Activated B cell treated with CpG ODN at 0.5 μM for 24 hours (primary cell): ENCODE measurements at regions of chr16 and their contacts with region 1.

Region 1: GRCh38 chr16:30429678-30430427 is at the start of gene DCTPP1:
- DNase-seq: peak; percentile 86
- ATAC-seq: peak; percentile 97
- H3K4me3 Mint-ChIP-seq: no peak within 1 kb of the TSS
- H3K27ac Mint-ChIP-seq: no peak within 1 kb of the TSS
- H3K4me1 Mint-ChIP-seq: peaks cover 2% of the 10 kb centered on the region
- H3K27me3 Mint-ChIP-seq: no peaks in the 10 kb centered on the region
- CTCF ChIP-seq: no peak
- total RNA-seq, gene DCTPP1: 66.7 and 81.5 TPM in 2 replicates

Region 2: GRCh38 chr16:29951625-29952365 is 478.1 kb before region 1 on chr16:
- CTCF ChIA-PET with region 1: no interaction called
- POLR2A ChIA-PET with region 1: no interaction called
- intact Hi-C with region 1: no loop called
- DNase-seq: no peak
- ATAC-seq: no peak
- H3K4me3 Mint-ChIP-seq: no peak overlapping the region
- H3K27ac Mint-ChIP-seq: no peak overlapping the region
- H3K4me1 Mint-ChIP-seq: no peaks in the 10 kb centered on the region
- H3K27me3 Mint-ChIP-seq: peaks cover 14% of the 10 kb centered on the region
- CTCF ChIP-seq: no peak

Region 3: GRCh38 chr16:30407102-30407803 is 22.6 kb before region 1 on chr16 and contains the start of gene ZNF771:
- CTCF ChIA-PET with region 1: interaction called, 11 read pairs
- POLR2A ChIA-PET with region 1: interaction called, 13 read pairs
- intact Hi-C with region 1: loop called (anchors 1 kb)
- DNase-seq: peak; percentile 90
- ATAC-seq: peak; percentile 89
- H3K4me3 Mint-ChIP-seq: peak within 1 kb of the TSS; percentile 89
- H3K27ac Mint-ChIP-seq: peak within 1 kb of the TSS; percentile 90
- H3K4me1 Mint-ChIP-seq: peaks cover 27% of the 10 kb centered on the region
- H3K27me3 Mint-ChIP-seq: no peaks in the 10 kb centered on the region
- CTCF ChIP-seq: no peak
- total RNA-seq, gene ZNF771: 4.4 and 5.2 TPM in 2 replicates

Region 4: DNA sequence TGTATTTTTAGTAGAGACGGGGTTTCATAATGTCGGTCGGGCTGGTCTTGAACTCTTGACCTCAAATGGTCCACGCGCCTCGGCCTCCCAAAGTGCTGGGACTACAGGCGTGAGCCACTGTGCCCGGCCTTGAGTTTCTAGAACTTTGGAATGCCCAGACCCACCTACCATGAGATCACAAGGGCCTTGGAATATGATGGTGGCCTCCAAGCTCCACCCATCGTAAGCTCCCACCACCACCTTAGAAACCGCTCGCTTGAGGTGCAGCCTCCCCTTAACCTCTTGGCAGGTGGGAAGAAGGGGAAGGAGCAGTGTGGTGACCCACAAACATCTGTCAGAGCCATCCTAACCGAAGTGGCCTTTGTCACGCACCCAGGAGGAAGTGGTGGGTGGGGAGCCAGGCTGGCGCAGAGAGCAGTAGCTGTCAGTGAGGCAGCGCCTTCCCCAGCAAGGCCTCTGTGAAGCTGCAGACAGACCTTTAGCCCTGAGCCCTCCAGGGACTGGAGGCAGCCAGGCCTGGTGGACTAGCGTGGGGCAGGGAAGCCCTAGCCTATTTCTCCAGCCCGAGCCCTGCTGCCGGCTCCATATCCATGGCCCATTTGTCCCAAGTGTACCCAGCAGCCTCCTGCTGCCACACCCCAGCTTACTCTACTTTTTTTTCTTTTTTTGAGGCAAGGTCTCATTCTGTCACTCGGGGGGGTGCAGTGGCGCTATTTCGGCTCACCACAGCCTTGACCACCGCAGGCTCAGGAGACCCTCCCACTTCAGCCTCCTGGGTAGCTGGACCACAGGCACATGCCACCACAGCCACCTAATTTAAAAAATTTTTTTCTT is 28.9 kb after region 1 on chr16:
- CTCF ChIA-PET with region 1: interaction called, 7 read pairs
- POLR2A ChIA-PET with region 1: interaction called, 25 read pairs
- intact Hi-C with region 1: no loop called
- DNase-seq: peak; percentile 69
- ATAC-seq: peak; percentile 92
- H3K4me3 Mint-ChIP-seq: peak overlapping the region; percentile 66
- H3K27ac Mint-ChIP-seq: peak overlapping the region; percentile 96
- H3K4me1 Mint-ChIP-seq: peaks cover 65% of the 10 kb centered on the region
- H3K27me3 Mint-ChIP-seq: no peaks in the 10 kb centered on the region
- CTCF ChIP-seq: no peak

Region 5: GRCh38 chr16:30499284-30499683 is 69.4 kb after region 1 on chr16:
- CTCF ChIA-PET with region 1: interaction called, 4 read pairs
- POLR2A ChIA-PET with region 1: interaction called, 12 read pairs
- intact Hi-C with region 1: no loop called
- DNase-seq: no peak
- ATAC-seq: no peak
- H3K4me3 Mint-ChIP-seq: no peak overlapping the region
- H3K27ac Mint-ChIP-seq: no peak overlapping the region
- H3K4me1 Mint-ChIP-seq: no peaks in the 10 kb centered on the region
- H3K27me3 Mint-ChIP-seq: no peaks in the 10 kb centered on the region
- CTCF ChIP-seq: no peak

Region 6: GRCh38 chr16:30557957-30558788 is 128.3 kb after region 1 on chr16 and contains the start of gene ZNF764:
- CTCF ChIA-PET with region 1: interaction called, 13 read pairs
- POLR2A ChIA-PET with region 1: interaction called, 26 read pairs
- intact Hi-C with region 1: loop called (anchors 1 kb)
- DNase-seq: peak; percentile 91
- ATAC-seq: peak; percentile 93
- H3K4me3 Mint-ChIP-seq: peak within 1 kb of the TSS; percentile 83
- H3K27ac Mint-ChIP-seq: peak within 1 kb of the TSS; percentile 84
- H3K4me1 Mint-ChIP-seq: peaks cover 43% of the 10 kb centered on the region
- H3K27me3 Mint-ChIP-seq: no peaks in the 10 kb centered on the region
- CTCF ChIP-seq: no peak
- total RNA-seq, gene ZNF764: 16.1 and 19.2 TPM in 2 replicates

Region 7: GRCh38 chr16:30602616-30603277 is 172.9 kb after region 1 on chr16:
- CTCF ChIA-PET with region 1: interaction called, 25 read pairs
- POLR2A ChIA-PET with region 1: interaction called, 10 read pairs
- intact Hi-C with region 1: loop called (anchors 1 kb)
- DNase-seq: no peak
- ATAC-seq: no peak
- H3K4me3 Mint-ChIP-seq: no peak overlapping the region
- H3K27ac Mint-ChIP-seq: no peak overlapping the region
- H3K4me1 Mint-ChIP-seq: peaks cover 3% of the 10 kb centered on the region
- H3K27me3 Mint-ChIP-seq: no peaks in the 10 kb centered on the region
- CTCF ChIP-seq: no peak

Region 8: GRCh38 chr16:30637942-30638341 is 208.1 kb after region 1 on chr16:
- CTCF ChIA-PET with region 1: interaction called, 3 read pairs
- POLR2A ChIA-PET with region 1: interaction called, 12 read pairs
- intact Hi-C with region 1: loop called (anchors 1 kb)
- DNase-seq: no peak
- ATAC-seq: no peak
- H3K4me3 Mint-ChIP-seq: no peak overlapping the region
- H3K27ac Mint-ChIP-seq: no peak overlapping the region
- H3K4me1 Mint-ChIP-seq: peaks cover 21% of the 10 kb centered on the region
- H3K27me3 Mint-ChIP-seq: no peaks in the 10 kb centered on the region
- CTCF ChIP-seq: no peak